ENCODE measurements at regions of chr20 and their contacts with region 1.

Region 1: DNA sequence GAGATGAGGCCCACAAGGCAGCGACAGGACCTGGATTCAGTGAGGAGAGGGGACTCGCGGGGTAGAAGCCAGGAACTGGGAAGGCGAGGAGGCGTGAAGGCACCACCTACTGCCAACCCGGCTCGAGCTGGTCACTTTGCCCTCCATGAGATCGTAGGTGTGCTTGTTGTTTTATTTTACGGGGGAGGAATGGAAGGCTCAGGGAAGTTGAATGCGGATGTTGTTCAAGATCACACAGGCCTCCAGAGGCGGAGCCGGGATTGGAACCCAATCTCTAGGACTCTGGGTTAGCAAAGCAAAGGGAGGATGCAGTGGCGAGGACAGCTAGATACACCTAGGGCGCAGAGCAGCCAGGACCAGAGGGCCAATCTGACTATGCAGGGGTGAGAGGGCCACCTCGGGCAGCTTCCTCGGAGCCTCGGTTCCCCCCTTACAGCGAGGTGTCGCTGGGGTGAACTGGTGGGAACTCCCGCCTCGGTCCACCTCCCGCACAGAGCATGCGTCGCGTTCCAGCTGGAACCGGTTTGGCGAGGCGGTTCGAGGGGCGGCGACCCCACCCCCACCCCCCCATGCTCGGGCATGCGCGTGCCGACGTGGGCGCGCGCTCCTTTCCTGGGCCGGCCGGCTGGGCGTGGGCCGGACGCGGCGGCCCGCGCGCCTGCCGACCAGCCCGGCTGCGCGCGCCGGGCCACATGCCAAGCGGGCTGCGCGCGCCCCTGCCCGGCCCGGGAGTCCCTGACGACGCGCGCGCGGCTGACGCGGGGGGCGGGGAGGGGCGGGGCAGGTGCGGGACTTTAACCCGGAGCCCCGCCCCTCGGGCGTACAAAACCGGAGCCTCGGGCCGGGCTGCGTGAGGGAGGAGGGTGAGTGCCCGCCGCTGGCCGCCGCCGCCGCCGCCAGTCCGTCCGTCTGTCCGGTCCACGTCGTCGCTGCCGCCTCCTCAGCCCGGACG is 80.4 kb upstream of the MYL9 start:
- DNase-seq: peak; percentile 95

Region 2: DNA sequence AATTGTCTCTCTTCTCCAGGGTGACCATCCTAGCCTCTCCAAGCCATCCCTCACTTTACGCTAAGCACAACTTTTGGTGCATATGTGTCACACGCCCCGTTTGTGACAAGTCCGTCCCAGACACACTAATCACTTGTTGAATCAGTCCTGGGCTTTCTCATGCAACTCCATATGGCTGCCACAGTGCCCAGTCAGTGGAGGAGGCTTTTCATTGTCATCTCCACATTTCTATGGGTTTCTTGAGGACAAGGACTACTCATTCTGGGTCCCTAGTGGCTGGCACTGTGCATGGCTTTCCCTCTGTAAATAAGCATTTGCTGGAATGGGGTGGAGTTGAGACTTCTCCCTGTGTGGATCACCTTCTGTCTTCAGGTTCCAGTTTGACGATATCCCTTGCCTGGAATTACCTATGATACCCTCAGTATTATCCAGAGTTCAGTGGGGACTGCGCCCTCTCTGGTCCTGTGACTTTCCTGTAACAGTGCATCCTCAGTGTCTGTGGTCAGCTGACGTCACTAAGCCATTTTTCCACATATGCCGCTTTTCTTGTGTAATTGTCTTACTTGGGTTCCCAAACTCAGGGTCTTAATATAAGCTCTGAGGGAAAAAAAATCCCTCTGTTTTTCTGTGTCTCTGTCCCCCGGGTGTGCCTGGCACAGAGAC is 20.6 kb after region 1 on chr20:
- intact Hi-C with region 1: loop called (anchors 1 kb)
- DNase-seq: no peak

Region 3: GRCh38 chr20:36499723-36500501 is 39.0 kb after region 1 on chr20:
- intact Hi-C with region 1: loop called (anchors 5 kb)
- DNase-seq: no peak

Measured in cardiac septum (tissue), 1 donor.